ENCODE measurements at regions of chr4 and their contacts with region 1.

Region 1: DNA sequence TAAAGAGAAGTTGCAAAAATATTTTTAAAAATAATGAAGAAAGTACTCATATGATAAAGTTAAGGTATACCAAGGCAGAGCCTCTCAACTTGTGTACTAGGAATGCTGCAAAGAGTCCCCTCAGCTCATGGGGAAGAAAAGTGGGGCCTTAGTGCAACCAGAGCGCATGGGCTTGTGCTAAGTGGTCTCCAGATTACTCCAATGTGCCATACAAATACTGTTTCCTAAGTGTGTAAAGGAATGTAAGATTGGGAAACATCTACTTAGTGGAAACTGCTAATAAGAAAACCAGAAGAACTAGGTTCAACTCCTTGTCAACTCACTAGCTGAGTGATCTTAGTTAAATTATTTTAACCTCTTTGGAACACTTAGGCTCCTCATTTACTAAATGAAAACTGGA is 39.1 kb downstream of the NAF1 start:
- DNase-seq: no peak
- H3K4me3 ChIP-seq: no peak overlapping the region
- H3K27ac ChIP-seq: no peak overlapping the region
- H3K4me1 ChIP-seq: no peaks in the 10 kb centered on the region
- H3K27me3 ChIP-seq: no peaks in the 10 kb centered on the region
- CTCF ChIP-seq: no peak
- EP300 ChIP-seq: no peak
- POLR2A ChIP-seq: no peak

Region 2: DNA sequence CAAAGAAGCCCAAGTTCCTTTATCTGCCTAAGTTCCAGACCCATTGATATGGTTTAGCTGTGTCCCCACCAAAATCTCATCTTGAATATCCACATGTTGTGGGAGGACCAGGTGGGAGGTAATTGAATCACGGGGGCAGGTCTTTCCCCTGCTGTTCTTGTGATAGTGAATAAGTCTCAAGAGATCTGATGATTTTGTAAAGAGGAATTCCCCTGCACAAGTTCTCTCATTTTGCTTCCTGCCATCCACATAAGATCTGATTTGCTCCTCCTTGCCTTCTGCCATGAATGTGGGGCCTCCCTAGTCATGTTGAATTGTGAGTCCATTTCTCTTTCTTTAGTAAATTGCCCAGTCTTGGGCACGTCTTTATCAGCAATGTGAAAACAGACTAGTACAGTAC is 1824.1 kb before region 1 on chr4:
- intact Hi-C with region 1: no loop called
- DNase-seq: no peak
- H3K4me3 ChIP-seq: no peak overlapping the region
- H3K27ac ChIP-seq: no peak overlapping the region
- H3K4me1 ChIP-seq: no peaks in the 10 kb centered on the region
- H3K27me3 ChIP-seq: no peaks in the 10 kb centered on the region
- CTCF ChIP-seq: no peak
- EP300 ChIP-seq: no peak
- POLR2A ChIP-seq: no peak

Region 3: DNA sequence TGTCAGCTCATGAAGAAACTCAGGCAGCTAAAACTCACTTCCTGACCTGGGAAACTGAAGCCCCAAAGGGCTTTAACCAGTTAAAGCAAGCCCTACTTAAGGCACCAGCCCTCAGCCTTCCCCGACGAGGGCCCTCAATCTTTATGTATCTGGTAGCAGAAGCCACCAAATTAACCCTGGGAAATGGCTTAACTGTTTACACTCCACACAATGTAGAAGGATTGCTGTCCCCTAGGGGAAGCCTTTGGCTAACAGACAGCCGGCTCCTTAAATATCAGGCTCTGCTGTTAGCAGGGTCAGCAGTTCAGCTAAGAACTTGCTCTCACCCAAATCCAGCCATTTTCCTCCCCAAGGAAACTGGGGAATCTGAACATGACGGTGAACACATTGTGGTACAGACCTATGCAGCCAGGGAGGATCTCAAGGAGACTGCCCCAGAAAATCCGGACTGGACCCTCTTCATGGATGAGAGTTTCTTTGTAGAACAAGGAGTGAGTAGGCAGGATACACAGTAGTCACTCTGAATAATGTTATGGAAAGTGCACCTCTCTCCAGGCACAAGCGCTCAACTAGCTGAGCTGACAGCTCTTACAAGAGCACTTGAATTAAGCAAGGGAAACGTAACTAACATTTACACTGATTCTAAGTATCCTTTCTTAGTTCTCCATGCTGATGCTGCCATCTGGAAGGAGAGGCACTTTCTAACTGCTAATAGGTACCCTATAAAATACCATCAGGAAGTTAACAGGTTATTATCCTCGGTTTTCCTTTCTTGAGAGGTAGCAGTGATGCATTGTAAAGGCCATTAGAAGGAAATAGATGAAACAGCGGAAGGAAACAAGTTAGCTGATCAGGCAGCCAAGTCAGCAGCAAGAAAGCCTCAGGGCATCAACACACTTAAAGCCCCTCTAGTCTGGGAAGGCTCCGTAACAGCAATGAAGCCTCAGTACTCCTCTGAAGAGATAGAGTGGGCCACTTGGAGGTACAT is 48.6 kb after region 1 on chr4:
- intact Hi-C with region 1: loop called in 1 of 4 experiments (anchors 1 kb)
- DNase-seq: no peak
- H3K4me3 ChIP-seq: no peak overlapping the region
- H3K27ac ChIP-seq: no peak overlapping the region
- H3K4me1 ChIP-seq: no peaks in the 10 kb centered on the region
- H3K27me3 ChIP-seq: no peaks in the 10 kb centered on the region
- CTCF ChIP-seq: no peak
- EP300 ChIP-seq: no peak
- POLR2A ChIP-seq: no peak

Region 4: GRCh38 chr4:163284304-163284703 is 156.7 kb after region 1 on chr4:
- intact Hi-C with region 1: no loop called
- DNase-seq: no peak
- H3K4me3 ChIP-seq: no peak overlapping the region
- H3K27ac ChIP-seq: no peak overlapping the region
- H3K4me1 ChIP-seq: no peaks in the 10 kb centered on the region
- H3K27me3 ChIP-seq: no peaks in the 10 kb centered on the region
- CTCF ChIP-seq: no peak
- EP300 ChIP-seq: no peak
- POLR2A ChIP-seq: no peak